CD4-positive, alpha-beta memory T cell (primary cell): ENCODE measurements at regions of chr6 and their contacts with region 1.

Region 1: DNA sequence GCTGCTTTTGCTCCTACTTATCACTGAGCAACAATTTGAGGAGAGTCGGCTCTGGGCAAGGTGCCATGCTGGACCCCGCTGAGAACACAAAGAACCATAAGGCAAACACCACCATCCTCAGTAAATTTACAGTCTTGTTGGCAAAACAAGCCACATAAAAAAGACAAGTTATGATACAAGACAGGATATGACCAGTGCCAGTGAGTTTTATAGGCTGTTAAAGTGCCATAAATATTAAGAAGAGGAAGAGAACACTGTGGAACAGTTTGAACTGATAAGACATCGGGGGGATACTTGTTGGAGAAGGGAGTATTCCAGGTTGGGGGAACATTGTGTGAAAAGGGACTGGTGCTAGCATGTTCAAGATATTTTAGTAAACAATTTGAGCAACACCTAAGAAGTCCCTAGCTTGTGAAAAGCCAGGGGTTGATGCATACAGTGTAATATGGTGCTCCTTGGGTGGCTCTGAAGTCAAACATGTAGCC is 25.3 kb upstream of the RIPOR2 start:
- DNase-seq: peak in 4 of 5 donors; percentile 40 to 58 (median 47)
- H3K4me3 ChIP-seq: no peak overlapping the region
- H3K4me3 Mint-ChIP-seq: peak overlapping the region; percentile 4 to 79 (median 64)
- H3K27ac ChIP-seq: peak overlapping the region; percentile 12
- H3K27ac Mint-ChIP-seq: peak overlapping the region; percentile 74 to 97 (median 91)
- H3K4me1 ChIP-seq: peaks cover 96% of the 10 kb centered on the region
- H3K4me1 Mint-ChIP-seq: peaks cover 68 to 90% (median 78%) of the 10 kb centered on the region in 4 donors
- H3K27me3 ChIP-seq: no peaks in the 10 kb centered on the region
- H3K27me3 Mint-ChIP-seq: no peaks in the 10 kb centered on the region

Region 2: DNA sequence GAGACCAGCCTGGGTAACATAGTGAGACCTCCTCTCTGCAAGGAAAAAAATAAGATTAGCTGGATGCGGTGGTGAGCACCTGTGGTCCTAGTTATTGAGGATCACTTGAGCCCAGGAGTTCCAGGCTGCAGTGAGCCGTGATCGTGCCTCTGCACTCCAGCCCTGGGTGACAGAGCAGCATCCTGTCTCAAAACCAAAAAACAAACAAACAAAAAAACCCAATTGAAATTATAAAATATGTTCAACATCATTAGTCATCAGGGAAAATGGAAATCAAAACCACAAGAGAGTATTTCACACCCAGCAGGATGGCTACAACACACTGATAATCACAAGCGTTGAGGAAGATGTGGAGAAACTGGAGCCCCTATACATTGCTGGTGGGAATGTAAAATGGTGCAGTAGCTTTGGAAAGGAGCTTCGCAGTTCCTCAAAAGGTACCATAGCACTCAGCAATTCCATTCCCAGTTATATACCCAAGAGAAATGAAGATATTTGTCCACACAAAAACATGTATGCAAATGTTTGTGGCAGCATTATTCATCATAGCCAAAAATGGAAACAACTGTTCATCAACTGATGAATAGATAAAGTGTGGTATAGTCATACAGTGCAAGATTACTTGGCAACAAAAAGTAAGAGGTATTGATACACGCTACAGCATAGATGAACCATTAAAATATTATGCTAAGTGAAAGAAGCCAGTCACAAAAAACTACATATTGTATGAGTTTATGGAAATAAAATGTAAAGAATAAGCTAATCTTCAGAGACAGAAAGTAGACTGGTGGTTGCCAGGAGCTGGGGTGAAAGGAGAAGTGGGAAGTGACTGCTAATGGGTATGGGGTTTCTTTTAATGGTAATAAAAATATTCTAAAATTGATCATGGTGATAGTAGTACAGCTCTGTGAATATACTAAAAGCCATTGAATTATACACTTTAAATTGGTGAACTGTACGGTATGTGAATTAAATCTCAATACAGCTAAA is 13.4 kb after region 1 on chr6:
- CTCF ChIA-PET with region 1: interaction called, 10 read pairs
- POLR2A ChIA-PET with region 1: interaction called, 393 read pairs
- intact Hi-C with region 1: no loop called
- DNase-seq: peak; percentile 46 to 73 (median 55)
- H3K4me3 ChIP-seq: peak overlapping the region in 1 of 2 donors; percentile 7
- H3K4me3 Mint-ChIP-seq: peak overlapping the region; percentile 66 to 78 (median 71)
- H3K27ac ChIP-seq: peak overlapping the region; percentile 49
- H3K27ac Mint-ChIP-seq: peak overlapping the region; percentile 91 to 97 (median 94)
- H3K4me1 ChIP-seq: peaks cover 67% of the 10 kb centered on the region
- H3K4me1 Mint-ChIP-seq: peaks cover 49 to 85% (median 72%) of the 10 kb centered on the region in 4 donors
- H3K27me3 ChIP-seq: no peaks in the 10 kb centered on the region
- H3K27me3 Mint-ChIP-seq: no peaks in the 10 kb centered on the region